ENCODE measurements at regions of chr2 and their contacts with region 1.

Region 1: GRCh38 chr2:113889471-113890252 is at the start of gene ACTR3:
- DNase-seq: peak; percentile 98
- ATAC-seq: peak; percentile 82
- H3K4me3 Mint-ChIP-seq: peak within 1 kb of the TSS; percentile 99
- H3K27ac Mint-ChIP-seq: peak within 1 kb of the TSS; percentile 99
- H3K4me1 Mint-ChIP-seq: peaks cover 65% of the 10 kb centered on the region
- H3K27me3 Mint-ChIP-seq: no peaks in the 10 kb centered on the region
- CTCF ChIP-seq: no peak
- total RNA-seq, gene ACTR3: 442 to 449 TPM

Region 2: DNA sequence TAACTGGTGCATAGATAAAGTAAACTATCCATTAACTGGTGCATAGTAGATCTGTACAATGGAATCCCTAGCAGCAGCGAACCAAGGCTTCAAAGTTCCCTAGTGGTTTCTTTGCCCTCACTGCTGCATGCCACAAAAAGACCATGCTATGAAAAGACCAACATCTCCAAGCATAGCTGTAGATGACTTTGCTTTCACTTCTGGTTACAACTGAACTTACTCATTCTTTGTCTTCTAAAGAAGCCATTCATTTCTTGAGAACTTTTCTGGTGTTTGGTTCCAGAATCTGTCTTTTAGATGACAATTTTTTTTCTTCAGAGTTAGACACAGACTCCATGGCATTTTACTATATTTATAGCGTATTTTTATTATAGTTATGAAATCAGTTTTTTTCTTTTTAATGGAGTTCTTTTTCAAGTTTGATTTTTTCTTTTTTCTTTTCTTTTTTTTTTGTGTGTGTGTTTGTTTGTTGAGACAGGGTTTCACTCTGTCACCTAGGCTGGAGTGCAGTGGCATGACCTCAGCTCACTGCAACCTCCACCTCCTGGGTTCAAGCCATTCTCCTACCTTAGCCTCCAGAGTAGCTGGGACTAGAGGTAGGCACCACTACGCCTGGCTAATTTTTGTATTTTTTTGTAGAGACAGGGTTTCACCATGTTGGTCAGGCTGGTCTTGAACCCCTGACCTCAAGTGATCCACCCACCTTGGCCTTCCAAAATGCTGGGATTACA is 196.8 kb before region 1 on chr2:
- CTCF ChIA-PET with region 1: no interaction called
- POLR2A ChIA-PET with region 1: interaction called, 3 read pairs
- intact Hi-C with region 1: loop called (anchors 10 kb)
- DNase-seq: peak; percentile 67
- ATAC-seq: peak; percentile 80
- H3K4me3 Mint-ChIP-seq: peak overlapping the region; percentile 57
- H3K27ac Mint-ChIP-seq: peak overlapping the region; percentile 93
- H3K4me1 Mint-ChIP-seq: peaks cover 46% of the 10 kb centered on the region
- H3K27me3 Mint-ChIP-seq: no peaks in the 10 kb centered on the region
- CTCF ChIP-seq: no peak

Region 3: GRCh38 chr2:113756355-113757137 is 133.1 kb before region 1 on chr2 and contains the start of gene SLC35F5:
- CTCF ChIA-PET with region 1: interaction called, 7 read pairs
- POLR2A ChIA-PET with region 1: interaction called, 7 read pairs
- intact Hi-C with region 1: loop called (anchors 5 kb)
- DNase-seq: peak; percentile 91
- ATAC-seq: peak; percentile 92
- H3K4me3 Mint-ChIP-seq: peak within 1 kb of the TSS; percentile 97
- H3K27ac Mint-ChIP-seq: peak within 1 kb of the TSS; percentile 100
- H3K4me1 Mint-ChIP-seq: peaks cover 26% of the 10 kb centered on the region
- H3K27me3 Mint-ChIP-seq: no peaks in the 10 kb centered on the region
- CTCF ChIP-seq: no peak
- total RNA-seq, gene SLC35F5: 17.9 to 18.9 TPM

Region 4: GRCh38 chr2:113863144-113863543 is 26.5 kb before region 1 on chr2:
- CTCF ChIA-PET with region 1: no interaction called
- POLR2A ChIA-PET with region 1: no interaction called
- intact Hi-C with region 1: no loop called
- DNase-seq: no peak
- ATAC-seq: no peak
- H3K4me3 Mint-ChIP-seq: no peak overlapping the region
- H3K27ac Mint-ChIP-seq: no peak overlapping the region
- H3K4me1 Mint-ChIP-seq: peaks cover 3% of the 10 kb centered on the region
- H3K27me3 Mint-ChIP-seq: no peaks in the 10 kb centered on the region
- CTCF ChIP-seq: no peak

Region 5: GRCh38 chr2:113876503-113877387 is 12.9 kb before region 1 on chr2:
- CTCF ChIA-PET with region 1: interaction called, 5 read pairs
- POLR2A ChIA-PET with region 1: interaction called, 10 read pairs
- intact Hi-C with region 1: no loop called
- DNase-seq: peak; percentile 88
- ATAC-seq: peak; percentile 94
- H3K4me3 Mint-ChIP-seq: peak overlapping the region; percentile 33
- H3K27ac Mint-ChIP-seq: peak overlapping the region; percentile 87
- H3K4me1 Mint-ChIP-seq: peaks cover 38% of the 10 kb centered on the region
- H3K27me3 Mint-ChIP-seq: no peaks in the 10 kb centered on the region
- CTCF ChIP-seq: no peak

Region 6: GRCh38 chr2:113910110-113910717 is 20.6 kb after region 1 on chr2:
- CTCF ChIA-PET with region 1: interaction called, 4 read pairs
- POLR2A ChIA-PET with region 1: interaction called, 35 read pairs
- intact Hi-C with region 1: no loop called
- DNase-seq: peak; percentile 83
- ATAC-seq: peak; percentile 89
- H3K4me3 Mint-ChIP-seq: peak overlapping the region; percentile 50
- H3K27ac Mint-ChIP-seq: peak overlapping the region; percentile 89
- H3K4me1 Mint-ChIP-seq: peaks cover 59% of the 10 kb centered on the region
- H3K27me3 Mint-ChIP-seq: no peaks in the 10 kb centered on the region
- CTCF ChIP-seq: no peak

Region 7: DNA sequence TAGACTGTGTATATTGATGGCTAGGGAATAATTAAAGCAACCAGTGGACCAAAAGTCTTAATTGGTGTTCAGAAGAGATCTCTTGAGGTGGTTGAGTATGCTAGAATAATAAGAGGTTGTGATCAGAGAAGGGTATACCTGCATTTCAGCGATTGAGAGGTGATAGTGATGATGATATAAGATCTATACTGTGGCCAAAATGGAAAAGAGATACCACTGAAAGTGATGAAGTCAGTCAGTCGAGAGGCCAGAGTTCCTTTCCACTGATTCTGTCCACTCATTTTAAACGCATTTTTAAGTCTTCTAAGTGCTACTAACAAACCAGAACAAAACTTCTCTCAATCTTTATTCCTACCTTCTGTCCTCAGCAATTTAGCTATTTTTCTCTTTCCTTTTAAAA is 33.1 kb after region 1 on chr2:
- CTCF ChIA-PET with region 1: no interaction called
- POLR2A ChIA-PET with region 1: no interaction called
- intact Hi-C with region 1: loop called (anchors 5 kb)
- DNase-seq: no peak
- ATAC-seq: peak; percentile 42
- H3K4me3 Mint-ChIP-seq: no peak overlapping the region
- H3K27ac Mint-ChIP-seq: no peak overlapping the region
- H3K4me1 Mint-ChIP-seq: peaks cover 27% of the 10 kb centered on the region
- H3K27me3 Mint-ChIP-seq: no peaks in the 10 kb centered on the region
- CTCF ChIP-seq: no peak

Region 8: DNA sequence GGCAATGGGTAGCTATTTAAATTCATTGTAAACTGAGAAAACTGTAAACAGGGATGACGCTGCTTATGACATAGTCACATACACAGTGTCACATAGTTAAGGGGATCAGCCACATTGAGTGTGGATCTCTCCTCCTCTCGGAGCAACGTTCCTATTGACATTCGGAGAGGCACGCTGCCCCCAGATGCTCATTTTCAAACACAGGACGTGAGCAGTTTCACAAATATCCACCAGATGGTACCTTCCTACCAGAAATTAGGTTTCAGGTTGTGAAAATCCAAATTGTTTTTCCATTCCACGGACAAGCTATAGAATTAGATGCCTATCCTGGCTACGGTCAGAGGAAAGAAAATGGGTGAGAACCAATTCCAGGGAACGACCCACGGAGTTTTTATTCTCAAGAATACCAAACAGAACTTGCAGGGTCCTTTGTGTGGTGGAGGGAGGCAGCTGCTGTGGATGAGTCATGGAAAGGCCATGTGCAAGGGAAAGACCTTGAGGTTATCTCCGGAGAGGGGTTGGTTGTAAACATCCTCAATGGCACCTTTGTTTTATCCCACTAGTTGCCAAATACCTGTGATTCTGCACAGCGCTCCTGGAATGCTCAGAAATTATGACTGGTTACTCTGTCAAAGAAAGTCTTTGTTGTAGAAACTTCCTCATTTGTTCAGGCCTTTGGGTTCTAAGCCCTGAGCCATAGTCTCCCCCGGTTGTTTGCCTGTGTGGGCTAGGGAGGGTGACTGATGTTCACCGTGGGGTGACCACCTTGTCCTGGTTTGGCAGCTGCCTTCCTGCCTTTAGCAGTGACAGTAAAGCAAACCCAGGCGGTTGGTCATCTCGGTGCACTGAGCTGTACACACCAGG is 88.2 kb after region 1 on chr2:
- CTCF ChIA-PET with region 1: interaction called, 17 read pairs
- POLR2A ChIA-PET with region 1: no interaction called
- intact Hi-C with region 1: loop called (anchors 5 kb)
- DNase-seq: no peak
- ATAC-seq: peak; percentile 31
- H3K4me3 Mint-ChIP-seq: no peak overlapping the region
- H3K27ac Mint-ChIP-seq: no peak overlapping the region
- H3K4me1 Mint-ChIP-seq: peaks cover 5% of the 10 kb centered on the region
- H3K27me3 Mint-ChIP-seq: no peaks in the 10 kb centered on the region
- CTCF ChIP-seq: no peak